Endothelial cell of umbilical vein (primary cell): ENCODE measurements at regions of chr18 and their contacts with region 1.

Region 1: GRCh38 chr18:22983175-22983574 is 50.0 kb downstream of the RBBP8 start:
- DNase-seq: peak; percentile 68
- H3K4me3 ChIP-seq: no peak overlapping the region
- H3K27ac ChIP-seq: no peak overlapping the region
- H3K4me1 ChIP-seq: peaks cover 6% of the 10 kb centered on the region
- H3K27me3 ChIP-seq: no peaks in the 10 kb centered on the region
- CTCF ChIP-seq: peak in 1 of 2 donors; percentile 15
- POLR2A ChIP-seq: no peak

Region 2: DNA sequence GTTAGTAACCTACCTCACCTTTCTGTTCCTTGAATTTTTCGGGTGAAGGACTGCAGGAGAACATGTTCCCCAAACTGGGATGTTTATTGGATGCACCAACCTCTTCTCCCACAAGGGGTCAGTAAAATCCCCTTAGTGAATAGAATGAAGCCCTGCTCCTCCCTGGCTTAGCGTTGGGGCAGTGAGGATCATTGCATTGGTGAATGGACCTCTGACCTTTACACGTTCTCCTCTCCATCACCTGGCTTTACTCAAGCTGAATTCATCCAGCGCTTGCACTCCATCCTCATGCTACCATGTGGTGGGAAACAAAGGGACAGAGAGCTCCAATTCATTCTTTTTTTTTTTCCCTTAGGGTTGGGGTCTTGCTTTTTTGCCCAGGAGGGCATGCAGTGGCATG is 1085.4 kb before region 1 on chr18:
- CTCF ChIA-PET with region 1: no interaction called
- POLR2A ChIA-PET with region 1: no interaction called
- dilution Hi-C with region 1: no loop called
- intact Hi-C with region 1: loop called (anchors 10 kb)
- DNase-seq: peak; percentile 57
- H3K4me3 ChIP-seq: no peak overlapping the region
- H3K27ac ChIP-seq: no peak overlapping the region
- H3K4me1 ChIP-seq: peaks cover 9% of the 10 kb centered on the region
- H3K27me3 ChIP-seq: no peaks in the 10 kb centered on the region
- CTCF ChIP-seq: peak; percentile 71 to 74
- POLR2A ChIP-seq: no peak

Region 3: GRCh38 chr18:22846088-22846683 is 137.0 kb before region 1 on chr18:
- CTCF ChIA-PET with region 1: interaction called, 60 read pairs
- POLR2A ChIA-PET with region 1: no interaction called
- dilution Hi-C with region 1: no loop called
- intact Hi-C with region 1: loop called (anchors 1 kb)
- DNase-seq: peak; percentile 22
- H3K4me3 ChIP-seq: no peak overlapping the region
- H3K27ac ChIP-seq: no peak overlapping the region
- H3K4me1 ChIP-seq: no peaks in the 10 kb centered on the region
- H3K27me3 ChIP-seq: peaks cover 23 to 26% of the 10 kb centered on the region in 2 experiments
- CTCF ChIP-seq: peak; percentile 17 to 32
- POLR2A ChIP-seq: no peak

Region 4: GRCh38 chr18:22946846-22947245 is 36.3 kb before region 1 on chr18:
- CTCF ChIA-PET with region 1: interaction called, 13 read pairs
- POLR2A ChIA-PET with region 1: no interaction called
- dilution Hi-C with region 1: no loop called
- intact Hi-C with region 1: no loop called
- DNase-seq: no peak
- H3K4me3 ChIP-seq: no peak overlapping the region
- H3K27ac ChIP-seq: no peak overlapping the region
- H3K4me1 ChIP-seq: no peaks in the 10 kb centered on the region
- H3K27me3 ChIP-seq: no peaks in the 10 kb centered on the region
- CTCF ChIP-seq: no peak
- POLR2A ChIP-seq: no peak

Region 5: GRCh38 chr18:22971038-22971437 is 12.1 kb before region 1 on chr18:
- CTCF ChIA-PET with region 1: interaction called, 18 read pairs
- POLR2A ChIA-PET with region 1: no interaction called
- dilution Hi-C with region 1: no loop called
- intact Hi-C with region 1: no loop called
- DNase-seq: no peak
- H3K4me3 ChIP-seq: no peak overlapping the region
- H3K27ac ChIP-seq: no peak overlapping the region
- H3K4me1 ChIP-seq: no peaks in the 10 kb centered on the region
- H3K27me3 ChIP-seq: no peaks in the 10 kb centered on the region
- CTCF ChIP-seq: no peak
- POLR2A ChIP-seq: no peak

Region 6: GRCh38 chr18:23291456-23292205 is 308.5 kb after region 1 on chr18:
- CTCF ChIA-PET with region 1: no interaction called
- POLR2A ChIA-PET with region 1: no interaction called
- dilution Hi-C with region 1: no loop called
- intact Hi-C with region 1: no loop called
- DNase-seq: no peak
- H3K4me3 ChIP-seq: no peak overlapping the region
- H3K27ac ChIP-seq: no peak overlapping the region
- H3K4me1 ChIP-seq: no peaks in the 10 kb centered on the region
- H3K27me3 ChIP-seq: no peaks in the 10 kb centered on the region
- CTCF ChIP-seq: no peak
- POLR2A ChIP-seq: no peak

Region 7: GRCh38 chr18:23416298-23416697 is 433.1 kb after region 1 on chr18:
- CTCF ChIA-PET with region 1: interaction called, 16 read pairs
- POLR2A ChIA-PET with region 1: no interaction called
- dilution Hi-C with region 1: no loop called
- intact Hi-C with region 1: no loop called
- DNase-seq: no peak
- H3K4me3 ChIP-seq: no peak overlapping the region
- H3K27ac ChIP-seq: no peak overlapping the region
- H3K4me1 ChIP-seq: no peaks in the 10 kb centered on the region
- H3K27me3 ChIP-seq: no peaks in the 10 kb centered on the region
- CTCF ChIP-seq: no peak
- POLR2A ChIP-seq: no peak